Posterior vena cava (tissue), 2 donors: ENCODE measurements at regions of chr22 and their contacts with region 1.

Region 1: DNA sequence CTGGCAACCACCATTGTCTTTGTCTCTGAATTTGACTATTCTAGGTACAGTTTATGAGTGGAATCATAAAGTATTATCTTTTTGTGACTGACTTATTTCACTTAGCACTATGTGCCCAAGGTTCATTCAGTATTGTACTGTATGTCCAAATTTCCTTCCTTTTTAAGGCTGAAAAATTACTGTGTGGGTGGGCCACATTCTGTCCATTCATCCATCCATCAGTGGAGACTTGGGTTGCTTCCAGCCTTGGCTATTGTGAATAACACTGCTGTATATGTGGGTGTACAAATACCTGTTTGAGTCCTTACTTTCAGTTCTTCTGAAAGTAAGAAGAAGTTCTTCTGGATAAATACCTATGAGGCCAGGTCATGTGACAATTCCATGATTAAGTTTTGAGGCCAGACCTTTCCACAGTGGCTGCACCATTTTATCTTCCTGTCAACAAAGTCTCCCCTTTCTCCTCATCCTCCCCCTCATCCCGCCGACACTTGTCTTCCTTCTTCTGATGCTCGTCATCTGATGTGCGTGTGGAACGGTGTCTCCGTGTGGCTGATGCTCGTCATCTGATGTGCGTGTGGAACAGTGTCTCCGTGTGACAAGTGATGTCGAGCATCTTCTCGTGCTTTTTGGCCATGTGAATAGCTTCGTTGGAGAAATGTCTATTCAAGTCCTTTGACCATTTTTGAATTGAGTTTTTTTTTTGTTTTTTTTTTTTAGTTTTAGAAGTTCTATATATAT is 49.5 kb downstream of the SBF1 start:
- DNase-seq: no peak

Region 2: DNA sequence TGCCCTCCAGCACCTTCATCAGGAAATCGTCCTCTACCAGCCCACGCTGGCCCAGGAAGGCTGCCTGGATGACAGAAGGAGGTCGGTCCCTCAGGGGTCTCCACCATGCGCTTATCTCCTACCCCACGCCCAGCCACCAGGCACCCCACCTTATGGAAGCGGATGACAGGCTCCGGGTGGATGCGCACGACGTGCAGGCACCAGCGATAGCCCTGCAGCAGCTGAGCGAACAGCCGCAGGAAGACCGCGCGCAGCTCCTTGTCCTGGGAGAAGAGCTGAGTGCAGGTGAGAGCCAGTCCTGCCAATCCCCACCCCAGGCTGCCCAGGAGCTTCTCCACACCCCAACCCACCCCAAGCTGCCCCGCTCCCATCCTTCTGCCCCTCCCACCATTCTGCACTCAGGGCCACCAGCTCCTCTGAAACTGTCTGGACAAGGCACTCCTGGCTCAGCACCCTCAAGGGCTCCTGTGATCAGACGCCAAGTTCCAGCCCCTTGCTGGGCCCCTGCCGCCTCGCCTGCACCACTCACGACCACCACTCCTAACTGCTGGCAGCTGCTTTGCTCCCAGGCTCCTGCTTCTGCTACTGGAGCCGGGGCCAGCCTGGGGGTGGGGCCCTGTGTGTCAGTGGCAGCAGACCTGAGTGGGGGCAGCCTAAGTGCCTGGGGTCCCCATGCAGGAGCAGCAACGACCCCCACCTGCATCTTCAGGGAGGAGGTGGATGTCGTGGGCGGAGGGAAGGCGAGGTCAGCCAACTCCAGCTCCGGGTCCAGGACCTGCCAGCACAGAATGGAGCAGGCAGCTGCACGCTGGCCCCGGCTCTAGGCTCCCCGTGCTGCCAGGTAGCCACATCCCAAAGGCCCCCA is 40.0 kb after region 1 on chr22:
- intact Hi-C with region 1: loop called in 1 of 2 experiments (anchors 2 kb)
- DNase-seq: no peak

Region 3: DNA sequence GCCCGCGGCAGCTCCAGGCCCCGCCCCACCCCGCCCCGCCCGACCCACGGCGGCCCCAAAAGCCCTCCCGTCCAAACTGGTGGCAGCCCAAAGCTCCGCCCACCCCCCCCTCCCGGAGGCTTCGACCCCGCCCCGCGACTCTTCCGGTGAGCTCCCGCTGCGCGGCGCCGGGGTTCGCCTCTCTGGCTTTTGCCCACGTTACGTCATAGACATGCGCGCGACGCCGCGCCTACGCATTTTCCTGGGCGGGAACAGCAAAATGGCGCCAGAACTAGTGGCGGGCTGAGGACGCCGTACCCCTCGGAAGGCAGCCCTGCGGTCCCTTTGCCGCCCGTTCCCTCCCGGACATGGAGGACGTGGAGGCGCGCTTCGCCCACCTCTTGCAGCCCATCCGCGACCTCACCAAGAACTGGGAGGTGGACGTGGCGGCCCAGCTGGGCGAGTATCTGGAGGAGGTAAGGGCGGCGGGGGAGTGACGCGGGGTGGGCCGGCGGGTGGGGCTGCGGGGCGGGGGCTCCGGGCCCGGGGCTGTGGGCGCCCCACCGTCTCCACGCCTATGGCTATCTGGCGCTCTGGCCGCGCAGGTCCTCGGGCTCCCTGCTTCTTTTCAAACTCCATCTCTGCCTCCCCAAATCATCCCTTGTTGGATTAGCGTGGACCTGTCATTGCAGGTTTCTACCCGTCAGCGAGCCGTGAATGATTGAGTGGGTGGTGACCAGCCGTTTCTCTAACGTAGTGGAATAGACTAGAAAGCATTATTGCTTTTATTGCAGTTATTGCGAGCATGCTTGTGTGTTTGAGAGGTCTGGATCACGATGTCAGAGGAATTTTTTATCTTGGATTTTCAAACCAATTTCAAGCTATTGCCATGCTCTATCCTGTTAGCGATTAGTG is 82.9 kb after region 1 on chr22 and contains the start of gene NCAPH2:
- intact Hi-C with region 1: no loop called
- DNase-seq: peak; percentile 99
- total RNA-seq, gene NCAPH2: 32.1 to 32.7 TPM